AG04450 (cell line): ENCODE measurements at regions of chr16 and their contacts with region 1.

Region 1: DNA sequence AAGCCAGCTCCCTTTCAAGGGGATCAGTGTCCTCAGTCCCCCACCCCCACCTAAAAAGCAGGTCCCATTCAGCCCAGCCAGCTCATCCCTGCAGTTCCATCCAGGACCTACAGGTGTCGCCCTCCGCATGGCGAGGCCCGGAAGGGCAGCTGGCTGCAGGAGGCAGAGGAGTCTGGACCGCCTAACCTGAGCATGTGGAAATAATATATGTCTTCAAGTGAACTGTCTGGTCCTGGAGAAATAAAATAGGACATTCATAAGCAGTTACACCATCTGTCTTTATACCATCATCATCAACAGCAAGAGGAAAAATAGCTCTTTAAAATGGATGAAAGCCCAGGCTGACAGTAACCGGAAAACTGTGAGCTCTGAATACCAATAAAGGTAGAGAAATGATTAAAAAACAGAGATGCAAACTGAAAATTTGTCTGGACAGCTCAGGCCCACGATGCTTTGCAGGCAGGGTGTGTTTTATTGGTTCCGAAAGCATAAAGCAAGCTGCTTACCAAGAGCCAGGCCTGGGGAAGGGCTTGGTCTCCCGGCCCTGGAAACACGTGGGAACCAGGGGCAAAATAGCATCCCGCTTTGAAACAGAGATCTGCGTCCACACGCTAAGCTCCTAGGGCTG is 215.2 kb downstream of the ZFHX3 start:
- DNase-seq: no peak
- H3K4me3 ChIP-seq: no peak overlapping the region
- H3K27ac ChIP-seq: no peak overlapping the region
- H3K27me3 ChIP-seq: no peaks in the 10 kb centered on the region
- CTCF ChIP-seq: peak; percentile 100

Region 2: GRCh38 chr16:71979617-71980016 is 853.1 kb before region 1 on chr16:
- CTCF ChIA-PET with region 1: no interaction called
- POLR2A ChIA-PET with region 1: no interaction called
- DNase-seq: no peak
- H3K4me3 ChIP-seq: no peak overlapping the region
- H3K27ac ChIP-seq: no peak overlapping the region
- H3K27me3 ChIP-seq: peaks cover 2% of the 10 kb centered on the region
- CTCF ChIP-seq: no peak

Region 3: GRCh38 chr16:72554935-72555334 is 277.8 kb before region 1 on chr16:
- CTCF ChIA-PET with region 1: no interaction called
- POLR2A ChIA-PET with region 1: no interaction called
- DNase-seq: no peak
- H3K4me3 ChIP-seq: no peak overlapping the region
- H3K27ac ChIP-seq: no peak overlapping the region
- H3K27me3 ChIP-seq: no peaks in the 10 kb centered on the region
- CTCF ChIP-seq: no peak

Region 4: GRCh38 chr16:72664509-72665225 is 168.1 kb before region 1 on chr16:
- CTCF ChIA-PET with region 1: interaction called, 14 read pairs
- POLR2A ChIA-PET with region 1: no interaction called
- DNase-seq: peak; percentile 97
- H3K4me3 ChIP-seq: peak overlapping the region; percentile 88
- H3K27ac ChIP-seq: peak overlapping the region; percentile 69
- H3K27me3 ChIP-seq: no peaks in the 10 kb centered on the region
- CTCF ChIP-seq: no peak

Region 5: GRCh38 chr16:72751076-72751475 is 81.7 kb before region 1 on chr16:
- CTCF ChIA-PET with region 1: no interaction called
- POLR2A ChIA-PET with region 1: no interaction called
- DNase-seq: no peak
- H3K4me3 ChIP-seq: no peak overlapping the region
- H3K27ac ChIP-seq: no peak overlapping the region
- H3K27me3 ChIP-seq: no peaks in the 10 kb centered on the region
- CTCF ChIP-seq: no peak

Region 6: GRCh38 chr16:72807245-72807644 is 25.5 kb before region 1 on chr16:
- CTCF ChIA-PET with region 1: interaction called, 23 read pairs
- POLR2A ChIA-PET with region 1: no interaction called
- DNase-seq: no peak
- H3K4me3 ChIP-seq: no peak overlapping the region
- H3K27ac ChIP-seq: no peak overlapping the region
- H3K27me3 ChIP-seq: no peaks in the 10 kb centered on the region
- CTCF ChIP-seq: no peak

Region 7: DNA sequence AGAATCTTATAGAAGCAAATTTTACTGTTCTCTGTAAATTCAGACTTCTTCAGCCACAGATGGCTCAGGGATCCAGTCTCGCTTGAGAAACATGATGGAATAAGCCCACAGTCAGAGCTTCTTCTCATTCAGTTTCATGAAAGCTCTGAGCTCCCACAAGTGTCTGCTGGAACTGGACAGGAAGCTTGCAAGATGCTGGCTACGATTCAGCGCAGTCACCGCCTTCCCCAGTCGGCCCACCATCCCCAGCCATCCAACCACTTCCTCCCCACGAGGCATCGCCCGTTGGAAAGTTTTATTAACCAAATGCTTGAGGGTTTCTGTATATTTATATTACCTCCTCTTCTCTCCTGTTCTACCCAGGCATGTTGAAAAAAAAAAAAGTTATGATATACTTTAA is 43.5 kb after region 1 on chr16:
- CTCF ChIA-PET with region 1: interaction called, 27 read pairs
- POLR2A ChIA-PET with region 1: no interaction called
- DNase-seq: peak; percentile 73
- H3K4me3 ChIP-seq: no peak overlapping the region
- H3K27ac ChIP-seq: peak overlapping the region; percentile 59
- H3K27me3 ChIP-seq: no peaks in the 10 kb centered on the region
- CTCF ChIP-seq: no peak

Region 8: GRCh38 chr16:72927199-72928089 is 94.7 kb after region 1 on chr16:
- CTCF ChIA-PET with region 1: interaction called, 17 read pairs
- POLR2A ChIA-PET with region 1: no interaction called
- DNase-seq: peak; percentile 78
- H3K4me3 ChIP-seq: no peak overlapping the region
- H3K27ac ChIP-seq: no peak overlapping the region
- H3K27me3 ChIP-seq: no peaks in the 10 kb centered on the region
- CTCF ChIP-seq: peak; percentile 12

Region 9: GRCh38 chr16:73000020-73000906 is 167.5 kb after region 1 on chr16:
- CTCF ChIA-PET with region 1: interaction called, 20 read pairs
- POLR2A ChIA-PET with region 1: no interaction called
- DNase-seq: no peak
- H3K4me3 ChIP-seq: no peak overlapping the region
- H3K27ac ChIP-seq: no peak overlapping the region
- H3K27me3 ChIP-seq: no peaks in the 10 kb centered on the region
- CTCF ChIP-seq: no peak

Region 10: GRCh38 chr16:73172241-73172972 is 339.7 kb after region 1 on chr16:
- CTCF ChIA-PET with region 1: interaction called, 17 read pairs
- POLR2A ChIA-PET with region 1: no interaction called
- DNase-seq: peak; percentile 67
- H3K4me3 ChIP-seq: peak overlapping the region; percentile 1; the same call in 1 of the 2 replicates
- H3K27ac ChIP-seq: peak overlapping the region; percentile 71
- H3K27me3 ChIP-seq: no peaks in the 10 kb centered on the region
- CTCF ChIP-seq: peak; percentile 56

Region 11: GRCh38 chr16:73743665-73744496 is 911.1 kb after region 1 on chr16:
- CTCF ChIA-PET with region 1: no interaction called
- POLR2A ChIA-PET with region 1: no interaction called
- DNase-seq: no peak
- H3K4me3 ChIP-seq: no peak overlapping the region
- H3K27ac ChIP-seq: no peak overlapping the region
- H3K27me3 ChIP-seq: no peaks in the 10 kb centered on the region
- CTCF ChIP-seq: no peak